IMR-90 (cell line): ENCODE measurements at regions of chr7 and their contacts with region 1.

Region 1: DNA sequence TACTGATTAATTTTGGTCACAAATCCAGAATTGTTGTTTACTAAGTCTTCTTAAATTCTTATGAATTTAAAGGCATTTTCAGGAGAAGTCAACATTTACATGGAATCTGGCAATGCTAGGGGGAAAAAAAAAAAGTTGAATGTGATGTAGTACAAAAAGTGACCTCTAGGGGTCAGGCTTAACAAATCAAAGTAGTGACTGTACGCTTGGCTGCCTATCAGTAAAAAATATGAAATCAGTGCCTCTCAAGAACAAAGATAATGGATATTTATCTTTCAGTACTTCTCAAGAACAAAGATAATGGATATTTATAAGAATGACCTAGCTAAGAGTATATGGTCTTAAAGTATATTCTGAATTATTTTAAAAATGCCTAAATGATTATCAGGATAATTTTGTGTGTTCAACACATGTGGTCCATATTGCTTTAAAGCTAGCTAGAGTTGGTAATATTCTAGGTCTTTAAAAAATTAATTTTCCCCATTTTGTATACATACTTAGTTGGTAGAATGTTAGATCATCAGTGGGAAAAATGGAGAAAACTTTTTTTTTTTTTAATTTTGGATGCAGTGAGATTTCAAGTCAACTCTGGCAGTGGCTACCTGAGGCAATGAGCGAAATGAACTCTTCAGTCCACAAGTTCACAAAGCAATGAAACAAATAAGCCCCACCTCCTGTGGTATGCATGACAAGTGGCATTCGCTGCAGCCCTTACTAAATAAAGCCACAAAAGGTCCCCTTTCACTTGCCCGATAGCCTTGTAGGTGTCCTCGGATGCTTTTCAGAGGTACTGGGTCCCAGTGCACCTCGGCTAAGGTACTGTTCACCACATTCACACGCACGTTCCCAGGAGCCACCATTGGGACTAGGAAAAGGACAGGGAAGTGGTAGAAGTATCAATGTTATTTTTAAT is 51.2 kb upstream of the LAMB4 start:
- DNase-seq: peak; percentile 67
- ATAC-seq: peak; percentile 75
- H3K4me3 ChIP-seq: no peak overlapping the region
- H3K27ac ChIP-seq: no peak overlapping the region
- H3K4me1 ChIP-seq: no peaks in the 10 kb centered on the region
- H3K27me3 ChIP-seq: peaks cover 15% of the 10 kb centered on the region
- CTCF ChIP-seq: peak; percentile 71
- POLR2A ChIP-seq: no peak
- RAD21 ChIP-seq: peak; percentile 82

Region 2: DNA sequence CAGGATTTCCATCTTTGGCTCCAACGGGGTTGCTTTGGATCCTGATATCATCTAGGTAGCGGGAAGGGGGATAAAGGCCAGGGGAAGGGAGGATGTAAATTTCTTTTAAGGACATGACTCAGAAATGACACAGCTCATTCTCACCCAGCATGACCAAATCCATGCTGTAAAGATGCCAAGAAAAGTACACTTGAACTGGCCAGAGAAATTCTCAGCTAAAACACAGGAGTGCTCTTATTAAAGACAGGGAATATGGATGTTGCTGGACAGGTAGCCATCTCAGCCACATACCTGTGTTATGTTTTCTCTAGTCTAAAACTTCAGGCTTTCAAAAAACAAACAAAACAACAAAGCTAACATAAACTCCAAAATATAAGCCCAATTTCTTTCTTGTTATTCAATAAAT is 1964.8 kb before region 1 on chr7:
- CTCF ChIA-PET with region 1: no interaction called
- POLR2A ChIA-PET with region 1: no interaction called
- dilution Hi-C with region 1: no loop called
- in situ Hi-C with region 1: no loop called
- intact Hi-C with region 1: no loop called
- DNase-seq: peak; percentile 97
- ATAC-seq: peak; percentile 90
- H3K4me3 ChIP-seq: no peak overlapping the region
- H3K27ac ChIP-seq: no peak overlapping the region
- H3K4me1 ChIP-seq: peaks cover 7% of the 10 kb centered on the region
- H3K27me3 ChIP-seq: peaks cover 2% of the 10 kb centered on the region; the same call in 1 of the 2 replicates
- CTCF ChIP-seq: no peak
- POLR2A ChIP-seq: no peak
- RAD21 ChIP-seq: no peak

Region 3: GRCh38 chr7:108135446-108136190 is 45.7 kb before region 1 on chr7:
- CTCF ChIA-PET with region 1: no interaction called
- POLR2A ChIA-PET with region 1: no interaction called
- dilution Hi-C with region 1: no loop called
- in situ Hi-C with region 1: no loop called
- intact Hi-C with region 1: no loop called
- DNase-seq: no peak
- ATAC-seq: no peak
- H3K4me3 ChIP-seq: no peak overlapping the region
- H3K27ac ChIP-seq: no peak overlapping the region
- H3K4me1 ChIP-seq: peaks cover 2% of the 10 kb centered on the region; the same call in 1 of the 2 replicates
- H3K27me3 ChIP-seq: no peaks in the 10 kb centered on the region
- CTCF ChIP-seq: no peak
- POLR2A ChIP-seq: no peak
- RAD21 ChIP-seq: no peak

Region 4: DNA sequence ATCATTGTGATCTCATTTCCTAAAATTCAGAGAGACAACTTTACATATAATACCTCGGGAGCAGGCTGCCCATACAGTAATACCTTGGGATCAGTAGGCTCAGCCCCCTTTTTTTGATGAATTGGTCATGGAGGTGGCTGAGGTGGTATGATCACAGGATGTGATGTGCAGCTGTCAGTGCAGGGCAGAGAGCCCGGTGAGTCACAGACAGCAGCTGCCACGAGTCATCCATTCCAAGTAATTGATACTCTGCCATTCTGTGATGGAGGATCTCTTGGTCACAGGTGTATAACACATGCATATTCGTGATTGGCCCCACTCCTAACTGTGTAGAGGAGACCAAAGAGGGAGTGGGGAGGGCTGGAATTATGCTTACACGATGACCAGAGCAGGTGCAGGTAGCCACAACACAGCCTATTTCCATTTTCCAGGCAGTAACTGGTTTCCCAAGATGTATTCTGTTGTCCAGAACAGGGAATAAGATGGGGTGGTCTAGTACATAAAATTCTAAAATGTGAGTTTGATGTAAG is 260.8 kb after region 1 on chr7:
- CTCF ChIA-PET with region 1: no interaction called
- POLR2A ChIA-PET with region 1: no interaction called
- dilution Hi-C with region 1: no loop called
- in situ Hi-C with region 1: loop called (anchors 10 kb)
- intact Hi-C with region 1: no loop called
- DNase-seq: no peak
- ATAC-seq: no peak
- H3K4me3 ChIP-seq: no peak overlapping the region
- H3K27ac ChIP-seq: no peak overlapping the region
- H3K4me1 ChIP-seq: no peaks in the 10 kb centered on the region
- H3K27me3 ChIP-seq: peaks cover 2% of the 10 kb centered on the region
- CTCF ChIP-seq: no peak
- POLR2A ChIP-seq: no peak
- RAD21 ChIP-seq: no peak

Region 5: DNA sequence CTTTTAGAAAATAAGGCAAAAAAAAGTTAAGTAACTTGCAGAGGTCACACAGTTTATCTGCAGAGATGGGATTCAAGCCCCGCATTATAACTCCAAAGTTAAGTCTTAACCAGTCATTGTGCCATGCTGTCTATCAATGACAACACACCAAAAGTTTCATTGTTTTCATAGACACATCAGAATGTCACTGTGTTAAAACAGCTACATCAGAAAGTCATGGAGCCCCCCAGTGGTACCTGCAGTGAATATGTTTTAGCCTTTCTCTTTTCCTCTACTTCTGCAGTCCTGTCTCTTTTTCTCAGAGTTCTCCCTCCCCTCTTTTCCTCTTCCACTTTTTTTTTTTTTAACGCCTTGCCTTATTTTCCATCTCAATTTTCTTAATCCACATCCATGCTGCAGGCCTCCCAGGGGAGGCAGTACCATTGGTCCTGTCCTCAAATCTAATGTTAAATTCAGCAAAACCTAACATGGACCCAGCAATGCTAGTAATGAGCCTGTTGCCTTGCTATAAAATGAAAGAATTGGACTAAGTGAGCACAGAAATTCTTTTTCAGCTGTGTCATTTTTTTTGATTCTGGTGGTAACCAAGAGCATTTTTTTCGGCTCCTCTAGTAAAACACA is 278.7 kb after region 1 on chr7:
- CTCF ChIA-PET with region 1: interaction called, 3 read pairs
- POLR2A ChIA-PET with region 1: no interaction called
- dilution Hi-C with region 1: no loop called
- in situ Hi-C with region 1: no loop called
- intact Hi-C with region 1: loop called (anchors 1 kb)
- DNase-seq: no peak
- ATAC-seq: peak; percentile 51; the same call in 1 of the 2 replicates
- H3K4me3 ChIP-seq: no peak overlapping the region
- H3K27ac ChIP-seq: no peak overlapping the region
- H3K4me1 ChIP-seq: no peaks in the 10 kb centered on the region; the same call in 1 of the 2 replicates
- H3K27me3 ChIP-seq: peaks cover 37% of the 10 kb centered on the region
- CTCF ChIP-seq: peak; percentile 45
- POLR2A ChIP-seq: no peak
- RAD21 ChIP-seq: peak; percentile 33; the same call in 1 of the 2 replicates

Region 6: DNA sequence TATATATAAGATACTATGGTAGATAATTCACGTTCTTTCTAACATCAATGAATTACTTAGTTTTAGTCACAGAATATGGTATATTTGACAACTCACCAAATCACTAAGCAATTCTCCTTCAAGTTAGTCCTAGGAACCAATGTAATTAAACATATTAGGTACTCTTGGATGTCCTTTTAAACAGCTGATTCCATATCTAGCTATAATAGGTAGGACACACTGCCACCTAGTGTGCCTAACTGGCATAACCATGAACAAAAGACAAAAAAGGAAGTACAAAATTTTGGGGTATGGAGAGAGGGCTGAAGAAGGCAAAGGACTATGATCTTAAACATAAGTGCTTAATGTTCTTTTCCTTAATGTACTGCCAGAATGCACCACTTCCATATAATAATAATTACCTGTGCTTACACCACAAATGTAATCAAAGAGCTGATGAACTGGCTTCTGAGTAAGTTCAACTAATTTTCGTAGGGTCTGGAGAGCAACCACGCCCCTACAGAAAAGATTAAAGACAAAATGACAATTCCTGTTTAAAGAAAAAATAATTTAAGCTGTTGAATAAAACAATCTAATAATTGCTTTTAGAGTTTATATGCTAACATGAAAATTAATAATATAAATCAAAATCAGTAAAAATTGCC is 315.9 kb after region 1 on chr7:
- CTCF ChIA-PET with region 1: interaction called, 10 read pairs
- POLR2A ChIA-PET with region 1: no interaction called
- dilution Hi-C with region 1: loop called (anchors 25 kb)
- in situ Hi-C with region 1: loop called (anchors 10 kb)
- intact Hi-C with region 1: loop called (anchors 1 kb)
- DNase-seq: peak; percentile 52
- ATAC-seq: peak; percentile 87
- H3K4me3 ChIP-seq: no peak overlapping the region
- H3K27ac ChIP-seq: no peak overlapping the region
- H3K4me1 ChIP-seq: peaks cover 5% of the 10 kb centered on the region; the same call in 1 of the 2 replicates
- H3K27me3 ChIP-seq: no peaks in the 10 kb centered on the region
- CTCF ChIP-seq: peak; percentile 73
- POLR2A ChIP-seq: no peak
- RAD21 ChIP-seq: peak; percentile 75